ENCODE measurements at regions of chr17 and their contacts with region 1.

Region 1: GRCh38 chr17:31494259-31495021 is 103.0 kb downstream of the RAB11FIP4 start:
- DNase-seq: peak; percentile 89
- H3K4me3 Mint-ChIP-seq: peak overlapping the region; percentile 62
- H3K27ac Mint-ChIP-seq: peak overlapping the region; percentile 94
- H3K4me1 Mint-ChIP-seq: peaks cover 62% of the 10 kb centered on the region
- H3K27me3 Mint-ChIP-seq: no peaks in the 10 kb centered on the region

Region 2: DNA sequence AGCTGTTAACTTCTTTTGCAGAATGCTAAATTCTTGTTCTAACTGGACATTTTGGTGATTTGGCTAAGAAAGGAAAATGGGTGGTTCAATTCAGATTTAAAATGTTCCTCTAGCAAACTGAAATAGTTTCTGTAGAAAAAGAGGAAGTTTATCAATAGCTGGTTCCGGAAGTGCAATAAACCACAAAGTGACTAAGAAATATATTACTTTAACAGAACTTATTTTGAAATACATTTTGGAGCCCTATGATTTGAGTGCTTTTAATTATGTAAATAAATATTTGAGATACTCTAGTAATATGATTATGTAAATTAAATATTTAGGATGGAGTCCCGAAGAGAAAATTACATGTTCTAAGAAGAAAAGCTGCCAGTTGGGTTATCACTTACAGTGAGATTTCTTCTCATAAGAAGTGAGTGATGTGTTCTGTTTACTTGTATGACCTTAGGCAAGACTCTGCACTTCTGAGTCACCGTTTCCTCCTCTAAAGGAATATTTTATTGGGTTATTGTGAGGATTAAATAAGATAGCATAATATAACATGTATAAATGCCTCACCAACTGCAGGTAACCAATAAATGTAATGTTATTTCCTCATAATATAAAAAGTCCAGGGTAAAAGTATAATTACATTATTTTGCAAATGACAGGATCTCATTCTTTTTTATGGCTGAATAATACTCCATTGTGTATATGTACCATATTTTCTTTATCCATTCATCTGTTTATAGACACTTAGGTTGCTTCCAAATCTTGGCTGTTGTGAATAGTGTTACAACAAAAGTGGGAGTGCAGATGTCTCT is 180.3 kb before region 1 on chr17 and contains the start of gene EVI2B:
- intact Hi-C with region 1: loop called (anchors 5 kb)
- DNase-seq: peak; percentile 71
- H3K4me3 Mint-ChIP-seq: peak within 1 kb of the TSS; percentile 93
- H3K27ac Mint-ChIP-seq: peak within 1 kb of the TSS; percentile 97
- H3K4me1 Mint-ChIP-seq: peaks cover 44% of the 10 kb centered on the region
- H3K27me3 Mint-ChIP-seq: no peaks in the 10 kb centered on the region
- total RNA-seq, gene EVI2B: 16.6 and 18.7 TPM in 2 replicates

Region 3: DNA sequence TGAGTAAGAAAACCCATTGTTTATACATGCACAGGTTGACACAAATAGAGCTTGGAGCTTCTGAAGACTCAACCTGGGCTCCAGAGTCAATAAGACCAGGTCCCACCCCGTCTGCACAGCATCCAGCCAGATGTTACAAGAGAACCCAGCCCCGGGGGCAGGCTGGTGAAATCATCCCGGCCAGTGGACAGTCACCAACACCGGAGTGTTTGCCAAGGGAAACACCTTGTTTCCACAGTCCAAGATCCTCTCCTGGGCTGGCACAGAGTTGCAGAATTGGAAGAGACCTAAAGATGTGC is 12.7 kb before region 1 on chr17:
- intact Hi-C with region 1: no loop called
- DNase-seq: no peak
- H3K4me3 Mint-ChIP-seq: no peak overlapping the region
- H3K27ac Mint-ChIP-seq: peak overlapping the region; percentile 56
- H3K4me1 Mint-ChIP-seq: peaks cover 9% of the 10 kb centered on the region
- H3K27me3 Mint-ChIP-seq: peaks cover 5% of the 10 kb centered on the region